ENCODE measurements at regions of chr11 and their contacts with region 1.

Region 1: GRCh38 chr11:6389921-6390724 is at the start of gene SMPD1:
- DNase-seq: peak; percentile 96
- H3K4me3 Mint-ChIP-seq: peak within 1 kb of the TSS; percentile 93
- H3K27ac Mint-ChIP-seq: peak within 1 kb of the TSS; percentile 97
- H3K4me1 Mint-ChIP-seq: peaks cover 43% of the 10 kb centered on the region
- H3K27me3 Mint-ChIP-seq: no peaks in the 10 kb centered on the region
- total RNA-seq, gene SMPD1: 55.1 to 58.5 TPM

Region 2: GRCh38 chr11:6333112-6333511 is 57.0 kb before region 1 on chr11:
- CTCF ChIA-PET with region 1: no interaction called
- POLR2A ChIA-PET with region 1: no interaction called
- DNase-seq: no peak
- H3K4me3 Mint-ChIP-seq: no peak overlapping the region
- H3K27ac Mint-ChIP-seq: no peak overlapping the region
- H3K4me1 Mint-ChIP-seq: no peaks in the 10 kb centered on the region
- H3K27me3 Mint-ChIP-seq: peaks cover 15% of the 10 kb centered on the region

Region 3: GRCh38 chr11:6402561-6402981 is 12.4 kb after region 1 on chr11:
- CTCF ChIA-PET with region 1: interaction called, 17 read pairs
- POLR2A ChIA-PET with region 1: interaction called, 143 read pairs
- DNase-seq: peak; percentile 87
- H3K4me3 Mint-ChIP-seq: peak overlapping the region; percentile 67
- H3K27ac Mint-ChIP-seq: peak overlapping the region; percentile 97
- H3K4me1 Mint-ChIP-seq: peaks cover 64% of the 10 kb centered on the region
- H3K27me3 Mint-ChIP-seq: no peaks in the 10 kb centered on the region

Region 4: GRCh38 chr11:6411594-6412031 is 21.5 kb after region 1 on chr11:
- CTCF ChIA-PET with region 1: interaction called, 3 read pairs
- POLR2A ChIA-PET with region 1: interaction called, 143 read pairs
- DNase-seq: no peak
- H3K4me3 Mint-ChIP-seq: no peak overlapping the region
- H3K27ac Mint-ChIP-seq: no peak overlapping the region
- H3K4me1 Mint-ChIP-seq: peaks cover 22% of the 10 kb centered on the region
- H3K27me3 Mint-ChIP-seq: no peaks in the 10 kb centered on the region

Region 5: GRCh38 chr11:6419009-6419631 is 29.0 kb after region 1 on chr11 and contains the start of gene APBB1:
- CTCF ChIA-PET with region 1: interaction called, 11 read pairs
- POLR2A ChIA-PET with region 1: interaction called, 49 read pairs
- DNase-seq: peak; percentile 78
- H3K4me3 Mint-ChIP-seq: peak within 1 kb of the TSS; percentile 75
- H3K27ac Mint-ChIP-seq: peak within 1 kb of the TSS; percentile 17
- H3K4me1 Mint-ChIP-seq: peaks cover 4% of the 10 kb centered on the region
- H3K27me3 Mint-ChIP-seq: peaks cover 28% of the 10 kb centered on the region
- total RNA-seq, gene APBB1: 56.0 to 57.6 TPM

Measured in activated CD4-positive, alpha-beta memory T cell treated with anti-CD3 and anti-CD28 coated beads, Interleukin-2, amount 10 ng/mL, durations not matched to agents 7 days and 5 days (primary cell).